ENCODE measurements at regions of chr9 and their contacts with region 1.

Region 1: DNA sequence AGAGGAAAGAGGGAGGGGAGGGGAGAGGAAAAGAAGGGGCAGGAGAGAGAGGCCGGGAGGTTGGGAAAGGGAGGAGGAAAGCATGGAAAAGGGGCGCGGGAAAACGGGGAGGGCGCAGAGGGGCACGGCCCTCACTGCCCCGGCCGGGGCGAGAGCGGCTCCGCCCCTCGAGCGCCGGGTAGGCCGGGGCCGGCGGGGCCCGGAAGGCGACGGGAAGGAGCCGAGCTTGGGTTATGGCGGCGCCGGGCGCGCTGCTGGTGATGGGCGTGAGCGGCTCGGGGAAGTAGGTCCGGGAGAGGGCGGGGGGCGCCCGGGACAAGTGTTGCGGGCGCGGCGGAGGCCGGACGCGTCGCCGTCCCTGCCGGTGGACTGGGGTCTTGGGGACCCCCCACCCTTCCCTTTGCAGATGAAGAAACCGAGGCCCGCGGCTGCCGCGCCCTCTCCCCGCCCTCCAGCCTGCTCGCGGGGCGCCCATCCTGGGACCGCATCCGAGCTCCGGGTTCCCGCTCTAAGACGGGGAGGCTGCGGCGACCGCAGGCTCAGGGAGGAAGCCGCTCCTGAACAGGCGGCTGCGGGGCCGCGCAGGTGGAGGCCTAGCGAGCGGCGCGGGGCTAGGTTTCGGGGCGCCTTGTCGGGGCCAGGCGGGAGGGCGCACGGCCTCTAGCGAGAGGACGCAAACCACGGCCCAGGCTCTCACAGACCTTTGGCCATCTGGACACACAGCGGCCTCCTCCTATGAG is at the start of gene IDNK:
- DNase-seq: peak; percentile 75
- ATAC-seq: peak; percentile 91 to 95
- total RNA-seq, gene IDNK: 3.4 to 3.5 TPM

Region 2: DNA sequence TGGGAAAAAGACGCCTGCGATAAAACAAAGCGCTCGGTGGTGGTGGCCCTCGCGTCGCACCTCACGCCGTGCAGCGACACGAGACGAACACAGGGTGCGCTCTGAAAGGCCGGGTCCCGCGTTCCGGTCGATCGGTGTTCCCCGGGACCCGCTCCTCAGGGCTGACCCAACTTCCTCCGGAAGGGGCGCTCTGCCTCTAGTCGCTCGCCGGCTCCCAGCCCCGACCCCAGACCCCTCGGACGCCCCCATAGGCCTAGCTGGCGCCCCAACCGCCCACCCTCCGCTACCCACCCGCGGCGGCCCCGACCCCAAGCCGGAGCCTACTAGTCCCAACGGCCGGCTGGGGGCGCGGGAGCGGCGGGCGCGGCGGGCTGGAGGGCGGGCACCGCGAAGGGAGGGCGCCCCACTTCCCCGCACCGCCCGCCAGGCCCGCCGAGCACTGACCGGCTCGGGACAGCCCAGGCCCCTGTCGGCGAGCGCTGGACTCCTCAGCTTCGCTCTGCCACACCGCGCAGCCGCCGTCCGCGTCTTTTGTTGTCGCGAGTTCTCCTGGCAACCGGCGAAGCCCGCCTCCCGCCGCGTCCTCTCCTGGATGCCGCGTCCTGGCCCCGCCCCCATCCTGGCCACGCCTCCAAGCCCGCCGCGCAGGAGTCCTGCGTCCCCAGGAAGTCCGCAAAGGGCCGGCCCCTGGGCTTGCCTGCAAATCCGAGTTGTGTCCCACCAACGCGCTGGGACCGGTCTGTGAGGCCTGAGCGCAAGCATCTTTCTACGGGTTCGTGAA is 298.0 kb after region 1 on chr9 and contains the start of gene KIF27:
- intact Hi-C with region 1: loop called (anchors 5 to 10 kb)
- DNase-seq: peak; percentile 99
- ATAC-seq: peak; percentile 98 to 99
- total RNA-seq, gene KIF27: 4.5 to 4.8 TPM